ENCODE measurements at regions of chr6 and their contacts with region 1.

Region 1: GRCh38 chr6:21033575-21034026 is 499.3 kb downstream of the CDKAL1 start:
- DNase-seq: peak; percentile 83
- H3K4me3 ChIP-seq: peak overlapping the region; percentile 9 to 38 (median 25)
- H3K27ac ChIP-seq: peak overlapping the region; percentile 91
- H3K4me1 ChIP-seq: peaks cover 21% of the 10 kb centered on the region
- H3K27me3 ChIP-seq: no peaks in the 10 kb centered on the region
- CTCF ChIP-seq: no peak

Region 2: GRCh38 chr6:20789162-20789561 is 244.4 kb before region 1 on chr6:
- CTCF ChIA-PET with region 1: no interaction called
- dilution Hi-C with region 1: no loop called
- in situ Hi-C with region 1: no loop called
- intact Hi-C with region 1: no loop called
- DNase-seq: no peak
- H3K4me3 ChIP-seq: no peak overlapping the region
- H3K27ac ChIP-seq: no peak overlapping the region
- H3K4me1 ChIP-seq: no peaks in the 10 kb centered on the region
- H3K27me3 ChIP-seq: no peaks in the 10 kb centered on the region
- CTCF ChIP-seq: peak in 1 of 2 donors; percentile 44

Region 3: GRCh38 chr6:20946022-20946421 is 87.6 kb before region 1 on chr6:
- CTCF ChIA-PET with region 1: no interaction called
- dilution Hi-C with region 1: no loop called
- in situ Hi-C with region 1: no loop called
- intact Hi-C with region 1: no loop called
- DNase-seq: peak; percentile 85
- H3K4me3 ChIP-seq: no peak overlapping the region
- H3K27ac ChIP-seq: no peak overlapping the region
- H3K4me1 ChIP-seq: peaks cover 2% of the 10 kb centered on the region
- H3K27me3 ChIP-seq: no peaks in the 10 kb centered on the region
- CTCF ChIP-seq: peak in 1 of 2 donors; percentile 36

Region 4: GRCh38 chr6:21188505-21189223 is 155.1 kb after region 1 on chr6:
- CTCF ChIA-PET with region 1: no interaction called
- dilution Hi-C with region 1: no loop called
- in situ Hi-C with region 1: no loop called
- intact Hi-C with region 1: loop called (anchors 5 kb)
- DNase-seq: peak; percentile 90
- H3K4me3 ChIP-seq: no peak overlapping the region
- H3K27ac ChIP-seq: peak overlapping the region; percentile 79
- H3K4me1 ChIP-seq: peaks cover 16% of the 10 kb centered on the region
- H3K27me3 ChIP-seq: no peaks in the 10 kb centered on the region
- CTCF ChIP-seq: no peak

Region 5: GRCh38 chr6:21317642-21318041 is 284.0 kb after region 1 on chr6:
- CTCF ChIA-PET with region 1: no interaction called
- dilution Hi-C with region 1: no loop called
- in situ Hi-C with region 1: no loop called
- intact Hi-C with region 1: no loop called
- DNase-seq: no peak
- H3K4me3 ChIP-seq: no peak overlapping the region
- H3K27ac ChIP-seq: no peak overlapping the region
- H3K4me1 ChIP-seq: no peaks in the 10 kb centered on the region
- H3K27me3 ChIP-seq: no peaks in the 10 kb centered on the region
- CTCF ChIP-seq: no peak

Measured in mammary epithelial cell (primary cell).